Mammary epithelial cell (primary cell): ENCODE measurements at regions of chr1 and their contacts with region 1.

Region 1: GRCh38 chr1:161531986-161532643 is 7.8 kb downstream of the HSPA6 start:
- DNase-seq: no peak
- H3K4me3 ChIP-seq: no peak overlapping the region
- H3K27ac ChIP-seq: no peak overlapping the region
- H3K4me1 ChIP-seq: peaks cover 3% of the 10 kb centered on the region
- H3K27me3 ChIP-seq: no peaks in the 10 kb centered on the region
- CTCF ChIP-seq: no peak

Region 2: GRCh38 chr1:161486806-161487741 is 45.0 kb before region 1 on chr1:
- CTCF ChIA-PET with region 1: no interaction called
- dilution Hi-C with region 1: no loop called
- in situ Hi-C with region 1: no loop called
- intact Hi-C with region 1: loop called (anchors 2 kb)
- DNase-seq: peak; percentile 71
- H3K4me3 ChIP-seq: no peak overlapping the region
- H3K27ac ChIP-seq: no peak overlapping the region
- H3K4me1 ChIP-seq: peaks cover 13% of the 10 kb centered on the region
- H3K27me3 ChIP-seq: no peaks in the 10 kb centered on the region
- CTCF ChIP-seq: peak; percentile 47 to 76

Region 3: GRCh38 chr1:161772397-161772796 is 240.3 kb after region 1 on chr1:
- CTCF ChIA-PET with region 1: no interaction called
- dilution Hi-C with region 1: no loop called
- in situ Hi-C with region 1: no loop called
- intact Hi-C with region 1: no loop called
- DNase-seq: no peak
- H3K4me3 ChIP-seq: no peak overlapping the region
- H3K27ac ChIP-seq: no peak overlapping the region
- H3K4me1 ChIP-seq: peaks cover 6% of the 10 kb centered on the region
- H3K27me3 ChIP-seq: no peaks in the 10 kb centered on the region
- CTCF ChIP-seq: no peak

Region 4: DNA sequence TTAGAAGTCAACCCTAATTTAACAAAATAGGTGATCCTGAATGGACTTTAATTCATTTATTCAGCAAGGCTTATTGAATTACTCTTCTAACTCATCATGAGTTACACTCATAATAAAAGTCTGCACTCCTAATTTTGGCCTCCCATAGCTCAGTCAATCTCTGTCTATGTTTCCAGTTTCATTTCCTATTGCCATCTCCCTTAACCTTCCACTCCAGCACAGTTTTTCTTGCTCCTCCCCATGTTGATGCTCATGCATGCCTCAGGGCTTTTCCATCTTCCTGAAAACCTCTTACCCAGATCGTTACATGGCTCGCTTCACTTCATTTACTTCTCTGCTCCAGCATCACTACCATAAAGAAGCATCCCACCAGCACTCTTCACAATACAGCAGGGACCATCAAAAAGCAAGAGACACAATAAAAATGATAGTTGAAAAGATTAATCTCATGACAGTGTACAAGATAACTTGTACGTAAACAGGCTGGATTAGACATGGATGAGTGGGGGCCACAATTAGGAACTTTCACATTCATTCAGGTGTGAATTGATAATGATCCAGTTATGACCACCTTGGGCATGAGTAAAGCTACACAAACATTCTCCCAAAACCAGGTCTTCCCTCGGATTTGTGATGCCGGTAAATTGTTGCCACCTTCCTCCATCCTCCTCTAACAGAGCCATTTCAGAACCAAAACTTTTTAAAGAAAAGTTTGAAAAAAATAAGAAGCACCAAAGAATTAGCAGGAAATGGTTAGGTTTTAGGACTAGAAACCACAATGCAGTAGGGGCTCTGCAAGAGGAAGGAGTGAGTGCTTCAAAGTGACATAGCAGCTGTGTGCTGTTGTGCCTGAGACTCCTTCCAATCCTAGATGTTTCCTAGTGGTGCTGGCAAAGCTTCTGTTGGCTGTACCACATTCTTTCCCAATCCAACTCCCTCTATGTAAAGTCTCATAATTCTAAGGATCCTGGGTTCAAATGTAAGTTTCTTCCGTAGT is 401.8 kb after region 1 on chr1:
- CTCF ChIA-PET with region 1: no interaction called
- dilution Hi-C with region 1: no loop called
- in situ Hi-C with region 1: no loop called
- intact Hi-C with region 1: no loop called
- DNase-seq: no peak
- H3K4me3 ChIP-seq: no peak overlapping the region
- H3K27ac ChIP-seq: no peak overlapping the region
- H3K4me1 ChIP-seq: no peaks in the 10 kb centered on the region
- H3K27me3 ChIP-seq: no peaks in the 10 kb centered on the region
- CTCF ChIP-seq: no peak